Endothelial cell of umbilical vein (primary cell): ENCODE measurements at regions of chr7 and their contacts with region 1.

Region 1: GRCh38 chr7:83936056-83936708 is 258.4 kb downstream of the SEMA3A start:
- DNase-seq: peak; percentile 78
- H3K4me3 ChIP-seq: no peak overlapping the region
- H3K27ac ChIP-seq: no peak overlapping the region
- H3K4me1 ChIP-seq: no peaks in the 10 kb centered on the region
- H3K27me3 ChIP-seq: no peaks in the 10 kb centered on the region
- CTCF ChIP-seq: peak; percentile 76 to 78
- POLR2A ChIP-seq: no peak

Region 2: GRCh38 chr7:83040484-83040883 is 895.7 kb before region 1 on chr7:
- CTCF ChIA-PET with region 1: no interaction called
- POLR2A ChIA-PET with region 1: no interaction called
- dilution Hi-C with region 1: no loop called
- intact Hi-C with region 1: no loop called
- DNase-seq: no peak
- H3K4me3 ChIP-seq: no peak overlapping the region
- H3K27ac ChIP-seq: no peak overlapping the region
- H3K4me1 ChIP-seq: no peaks in the 10 kb centered on the region
- H3K27me3 ChIP-seq: peaks cover 0 to 2% of the 10 kb centered on the region in 2 experiments
- CTCF ChIP-seq: no peak
- POLR2A ChIP-seq: no peak

Region 3: GRCh38 chr7:83807774-83808173 is 128.4 kb before region 1 on chr7:
- CTCF ChIA-PET with region 1: no interaction called
- POLR2A ChIA-PET with region 1: no interaction called
- dilution Hi-C with region 1: no loop called
- intact Hi-C with region 1: no loop called
- DNase-seq: no peak
- H3K4me3 ChIP-seq: no peak overlapping the region
- H3K27ac ChIP-seq: no peak overlapping the region
- H3K4me1 ChIP-seq: no peaks in the 10 kb centered on the region
- H3K27me3 ChIP-seq: no peaks in the 10 kb centered on the region
- CTCF ChIP-seq: no peak
- POLR2A ChIP-seq: no peak

Region 4: GRCh38 chr7:83947260-83947659 is 11.1 kb after region 1 on chr7:
- CTCF ChIA-PET with region 1: interaction called, 31 read pairs
- POLR2A ChIA-PET with region 1: no interaction called
- dilution Hi-C with region 1: no loop called
- intact Hi-C with region 1: no loop called
- DNase-seq: no peak
- H3K4me3 ChIP-seq: no peak overlapping the region
- H3K27ac ChIP-seq: no peak overlapping the region
- H3K4me1 ChIP-seq: no peaks in the 10 kb centered on the region
- H3K27me3 ChIP-seq: peaks cover 0 to 2% of the 10 kb centered on the region in 2 experiments
- CTCF ChIP-seq: peak; percentile 38 to 47
- POLR2A ChIP-seq: no peak

Region 5: DNA sequence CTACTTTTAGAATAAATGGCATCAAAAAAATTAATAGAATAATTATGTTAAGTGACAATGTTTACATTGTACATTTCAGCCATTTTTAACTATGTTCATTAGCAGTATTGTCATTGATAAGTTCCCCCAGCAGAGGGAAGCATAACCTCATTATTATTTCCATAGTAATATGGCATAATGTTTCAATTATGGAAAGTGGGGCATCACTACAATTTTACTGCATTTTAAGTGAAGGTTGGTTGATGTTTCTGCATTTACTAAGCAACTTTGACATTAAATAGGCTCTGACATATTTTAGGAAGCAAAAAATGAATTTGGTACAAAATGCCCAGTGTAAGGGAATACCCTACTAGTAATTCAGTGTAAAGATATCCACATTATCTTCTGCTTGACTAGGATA is 40.1 kb after region 1 on chr7:
- CTCF ChIA-PET with region 1: interaction called, 8 read pairs
- POLR2A ChIA-PET with region 1: no interaction called
- dilution Hi-C with region 1: no loop called
- intact Hi-C with region 1: loop called (anchors 1 kb)
- DNase-seq: peak; percentile 55
- H3K4me3 ChIP-seq: no peak overlapping the region
- H3K27ac ChIP-seq: no peak overlapping the region
- H3K4me1 ChIP-seq: no peaks in the 10 kb centered on the region
- H3K27me3 ChIP-seq: no peaks in the 10 kb centered on the region
- CTCF ChIP-seq: peak; percentile 23 to 30
- POLR2A ChIP-seq: no peak

Region 6: DNA sequence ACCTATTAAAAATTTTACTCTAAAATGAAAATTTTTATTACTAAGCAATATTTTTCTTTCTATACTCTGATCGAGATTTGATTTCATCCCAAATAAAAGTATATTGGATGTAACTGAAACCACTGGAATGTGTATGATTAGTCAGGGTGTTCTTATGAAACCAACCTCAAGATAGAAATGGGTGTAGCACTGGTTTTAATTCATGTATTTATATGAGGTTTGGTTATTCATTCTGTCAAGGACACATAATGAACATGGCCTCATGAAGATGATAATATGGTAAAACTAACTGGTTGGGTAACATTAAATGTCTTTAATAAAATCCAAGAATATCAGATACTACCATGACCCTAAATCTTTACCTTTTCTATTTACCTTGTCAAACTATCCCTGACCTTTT is 60.7 kb after region 1 on chr7:
- CTCF ChIA-PET with region 1: no interaction called
- POLR2A ChIA-PET with region 1: no interaction called
- dilution Hi-C with region 1: no loop called
- intact Hi-C with region 1: no loop called
- DNase-seq: no peak
- H3K4me3 ChIP-seq: no peak overlapping the region
- H3K27ac ChIP-seq: no peak overlapping the region
- H3K4me1 ChIP-seq: no peaks in the 10 kb centered on the region
- H3K27me3 ChIP-seq: no peaks in the 10 kb centered on the region
- CTCF ChIP-seq: no peak
- POLR2A ChIP-seq: no peak

Region 7: DNA sequence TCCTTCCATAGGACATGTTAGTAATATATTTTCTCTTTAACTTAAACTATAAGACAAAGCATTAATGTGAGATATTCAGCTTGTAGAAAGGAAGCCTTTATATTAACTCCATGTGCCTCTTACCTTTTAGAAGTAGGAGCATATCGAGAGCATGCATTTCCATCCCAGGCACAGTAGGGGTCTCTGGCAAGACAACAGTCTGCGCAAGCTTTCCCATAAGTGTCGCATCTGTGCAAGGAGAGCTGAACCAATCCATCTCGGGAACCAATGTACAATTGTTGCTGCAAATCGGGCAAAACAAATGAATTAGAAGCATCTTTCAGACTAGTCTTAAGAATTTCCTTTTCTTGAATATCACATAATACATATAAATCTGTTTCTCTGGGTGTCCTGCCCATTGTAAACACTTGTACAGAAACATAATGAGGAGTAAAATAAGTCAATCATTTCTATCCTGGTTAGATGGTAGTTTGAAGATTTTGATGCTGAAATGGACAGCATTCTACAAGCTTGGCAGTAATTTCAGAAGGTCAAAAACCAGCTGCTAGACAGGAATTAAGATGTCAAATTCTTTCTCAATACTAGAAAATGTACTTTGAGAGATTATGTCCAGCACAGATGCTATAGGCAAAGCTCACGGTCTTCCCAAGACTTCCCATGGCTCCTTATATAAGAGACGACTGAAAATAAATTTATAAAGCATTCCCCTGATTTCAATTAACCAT is 1078.9 kb after region 1 on chr7:
- CTCF ChIA-PET with region 1: interaction called, 15 read pairs
- POLR2A ChIA-PET with region 1: no interaction called
- dilution Hi-C with region 1: no loop called
- intact Hi-C with region 1: no loop called
- DNase-seq: no peak
- H3K4me3 ChIP-seq: no peak overlapping the region
- H3K27ac ChIP-seq: no peak overlapping the region
- H3K4me1 ChIP-seq: no peaks in the 10 kb centered on the region
- H3K27me3 ChIP-seq: no peaks in the 10 kb centered on the region
- CTCF ChIP-seq: peak in 1 of 2 donors; percentile 3
- POLR2A ChIP-seq: no peak

Region 8: GRCh38 chr7:85464042-85464651 is 1528.0 kb after region 1 on chr7:
- CTCF ChIA-PET with region 1: interaction called, 3 read pairs
- POLR2A ChIA-PET with region 1: no interaction called
- dilution Hi-C with region 1: no loop called
- intact Hi-C with region 1: loop called (anchors 10 kb)
- DNase-seq: peak; percentile 13
- H3K4me3 ChIP-seq: no peak overlapping the region
- H3K27ac ChIP-seq: no peak overlapping the region
- H3K4me1 ChIP-seq: no peaks in the 10 kb centered on the region
- H3K27me3 ChIP-seq: no peaks in the 10 kb centered on the region
- CTCF ChIP-seq: no peak
- POLR2A ChIP-seq: no peak

Region 9: GRCh38 chr7:85829817-85830432 is 1893.7 kb after region 1 on chr7:
- CTCF ChIA-PET with region 1: interaction called, 22 read pairs
- POLR2A ChIA-PET with region 1: no interaction called
- dilution Hi-C with region 1: no loop called
- intact Hi-C with region 1: no loop called
- DNase-seq: no peak
- H3K4me3 ChIP-seq: no peak overlapping the region
- H3K27ac ChIP-seq: no peak overlapping the region
- H3K4me1 ChIP-seq: no peaks in the 10 kb centered on the region
- H3K27me3 ChIP-seq: no peaks in the 10 kb centered on the region
- CTCF ChIP-seq: no peak
- POLR2A ChIP-seq: no peak